Adrenal gland (tissue), 19 donors: ENCODE measurements at regions of chr12 and their contacts with region 1.

Region 1: GRCh38 chr12:318759-319515 is 56.3 kb upstream of the SLC6A13 start:
- DNase-seq: no peak
- H3K4me3 ChIP-seq: no peak overlapping the region
- H3K27ac ChIP-seq: no peak overlapping the region
- H3K4me1 ChIP-seq: peaks cover 6 to 8% of the 10 kb centered on the region in 2 donors
- H3K27me3 ChIP-seq: no peaks in the 10 kb centered on the region
- CTCF ChIP-seq: no peak
- POLR2A ChIP-seq: no peak

Region 2: DNA sequence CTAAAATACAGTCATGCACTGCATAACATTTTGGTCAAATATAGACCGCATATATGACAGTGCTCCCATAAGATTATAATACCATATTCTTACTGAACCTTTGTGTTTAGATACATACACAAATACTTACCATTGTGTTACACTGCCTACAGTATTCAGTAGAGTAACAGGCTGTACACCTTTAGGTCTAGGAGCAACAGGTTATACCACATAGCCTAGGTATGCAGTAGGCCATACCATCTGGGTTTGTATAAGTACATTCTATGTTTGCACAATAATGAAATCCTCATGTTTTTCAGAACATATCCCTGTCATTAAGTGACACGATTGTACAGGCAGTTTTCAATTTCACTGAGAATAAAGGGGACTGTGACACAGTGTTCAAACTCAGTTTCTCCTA is 47.9 kb after region 1 on chr12:
- intact Hi-C with region 1: loop called in 1 of 2 experiments (anchors 10 kb)
- DNase-seq: no peak
- H3K4me3 ChIP-seq: no peak overlapping the region
- H3K27ac ChIP-seq: no peak overlapping the region
- H3K4me1 ChIP-seq: peaks cover 4 to 9% of the 10 kb centered on the region in 2 donors
- H3K27me3 ChIP-seq: no peaks in the 10 kb centered on the region
- CTCF ChIP-seq: no peak
- POLR2A ChIP-seq: no peak